ENCODE measurements at regions of chr10 and their contacts with region 1.

Region 1: DNA sequence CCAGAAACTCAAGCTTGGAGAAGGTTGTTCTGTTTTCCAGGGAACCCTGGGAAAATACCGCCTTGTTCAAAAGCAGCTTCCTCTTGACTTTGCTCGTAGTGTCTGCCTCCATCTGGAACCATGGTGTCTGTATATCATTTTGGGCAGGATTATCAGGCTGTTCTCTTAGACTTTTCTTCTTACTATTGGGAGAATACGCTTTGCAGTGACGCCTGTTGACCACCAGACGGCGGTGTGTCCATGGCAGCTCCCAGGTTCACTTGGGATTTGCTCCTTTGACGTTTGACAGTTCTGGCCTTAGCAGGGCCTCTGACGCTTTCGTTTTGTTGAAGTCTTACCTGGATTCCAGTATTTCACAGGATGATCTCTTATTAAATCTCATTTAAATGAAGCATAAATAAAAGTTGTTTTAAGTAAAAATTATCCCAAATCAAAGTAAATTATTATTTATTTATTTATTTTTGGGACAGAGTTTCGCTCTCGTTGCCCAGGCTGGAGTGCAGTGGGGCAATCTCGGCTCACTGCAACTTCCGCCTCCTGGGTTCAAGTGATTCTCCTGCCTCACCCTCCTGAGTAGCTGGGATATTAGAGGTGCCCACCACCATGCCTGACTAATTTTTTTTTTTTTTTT is 41.8 kb upstream of the GJD4 start:
- DNase-seq: peak in 4 of 5 donors; percentile 18 to 40 (median 23)
- H3K4me3 ChIP-seq: no peak overlapping the region
- H3K4me3 Mint-ChIP-seq: peak overlapping the region in 1 of 8 donors; percentile 23
- H3K27ac ChIP-seq: no peak overlapping the region
- H3K27ac Mint-ChIP-seq: peak overlapping the region in 1 of 7 donors; percentile 29
- H3K4me1 ChIP-seq: no peaks in the 10 kb centered on the region
- H3K4me1 Mint-ChIP-seq: peaks cover 5 to 9% (median 7%) of the 10 kb centered on the region in 4 donors
- H3K27me3 ChIP-seq: no peaks in the 10 kb centered on the region
- H3K27me3 Mint-ChIP-seq: no peaks in the 10 kb centered on the region

Region 2: GRCh38 chr10:35236739-35237138 is 326.6 kb before region 1 on chr10:
- CTCF ChIA-PET with region 1: interaction called, 19 read pairs
- POLR2A ChIA-PET with region 1: no interaction called
- intact Hi-C with region 1: loop called (anchors 1 kb)
- DNase-seq: no peak
- H3K4me3 ChIP-seq: no peak overlapping the region
- H3K4me3 Mint-ChIP-seq: no peak overlapping the region
- H3K27ac ChIP-seq: no peak overlapping the region
- H3K27ac Mint-ChIP-seq: no peak overlapping the region
- H3K4me1 ChIP-seq: no peaks in the 10 kb centered on the region
- H3K4me1 Mint-ChIP-seq: no peaks in the 10 kb centered on the region
- H3K27me3 ChIP-seq: no peaks in the 10 kb centered on the region
- H3K27me3 Mint-ChIP-seq: no peaks in the 10 kb centered on the region

Region 3: DNA sequence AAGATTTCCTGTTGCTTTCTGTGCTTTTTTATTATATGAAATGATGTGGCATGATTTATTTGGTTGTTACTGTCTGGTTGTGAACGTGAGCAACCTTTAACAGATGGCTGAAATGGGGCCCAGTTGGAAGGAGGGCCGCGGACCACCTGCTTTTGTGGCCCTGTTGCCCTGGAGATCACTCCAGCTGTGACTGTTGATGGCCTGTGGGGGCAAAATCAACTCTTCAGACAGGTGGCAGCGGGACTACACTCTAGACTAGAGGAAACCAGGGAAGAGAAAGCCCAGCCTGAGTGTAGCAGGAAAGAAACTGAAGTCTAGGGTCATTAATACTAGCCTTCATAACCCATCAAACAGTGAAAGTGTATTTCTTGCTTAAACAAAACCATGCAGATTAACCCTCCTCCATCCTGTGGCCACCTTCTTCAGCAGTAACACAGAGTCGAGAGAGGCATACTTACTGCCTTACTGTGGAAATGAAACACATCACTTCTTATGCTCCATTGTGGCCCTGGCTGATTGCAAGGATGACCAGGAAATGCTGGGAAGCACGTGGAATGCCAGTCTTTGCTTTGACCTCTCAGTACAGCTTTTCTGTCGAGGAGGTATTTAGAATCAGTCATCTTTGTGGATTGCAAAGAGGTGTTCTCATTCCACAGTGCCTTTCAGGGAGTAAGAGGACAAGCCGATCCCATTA is 146.6 kb before region 1 on chr10:
- CTCF ChIA-PET with region 1: interaction called, 24 read pairs
- POLR2A ChIA-PET with region 1: no interaction called
- intact Hi-C with region 1: no loop called
- DNase-seq: no peak
- H3K4me3 ChIP-seq: no peak overlapping the region
- H3K4me3 Mint-ChIP-seq: peak overlapping the region in 1 of 8 donors; percentile 21
- H3K27ac ChIP-seq: no peak overlapping the region
- H3K27ac Mint-ChIP-seq: peak overlapping the region in 4 of 7 donors; percentile 0 to 62 (median 55)
- H3K4me1 ChIP-seq: peaks cover 40% of the 10 kb centered on the region
- H3K4me1 Mint-ChIP-seq: peaks cover 45 to 78% (median 50%) of the 10 kb centered on the region in 4 donors
- H3K27me3 ChIP-seq: no peaks in the 10 kb centered on the region
- H3K27me3 Mint-ChIP-seq: no peaks in the 10 kb centered on the region

Region 4: GRCh38 chr10:35594115-35595079 is 31.0 kb after region 1 on chr10:
- CTCF ChIA-PET with region 1: no interaction called
- POLR2A ChIA-PET with region 1: no interaction called
- intact Hi-C with region 1: no loop called
- DNase-seq: no peak
- H3K4me3 ChIP-seq: no peak overlapping the region
- H3K4me3 Mint-ChIP-seq: no peak overlapping the region
- H3K27ac ChIP-seq: no peak overlapping the region
- H3K27ac Mint-ChIP-seq: no peak overlapping the region
- H3K4me1 ChIP-seq: no peaks in the 10 kb centered on the region
- H3K4me1 Mint-ChIP-seq: no peaks in the 10 kb centered on the region
- H3K27me3 ChIP-seq: no peaks in the 10 kb centered on the region
- H3K27me3 Mint-ChIP-seq: peaks cover 2% of the 10 kb centered on the region in 2 donors

Measured in CD4-positive, alpha-beta memory T cell (primary cell).